ENCODE measurements at regions of chr10 and their contacts with region 1.

Region 1: DNA sequence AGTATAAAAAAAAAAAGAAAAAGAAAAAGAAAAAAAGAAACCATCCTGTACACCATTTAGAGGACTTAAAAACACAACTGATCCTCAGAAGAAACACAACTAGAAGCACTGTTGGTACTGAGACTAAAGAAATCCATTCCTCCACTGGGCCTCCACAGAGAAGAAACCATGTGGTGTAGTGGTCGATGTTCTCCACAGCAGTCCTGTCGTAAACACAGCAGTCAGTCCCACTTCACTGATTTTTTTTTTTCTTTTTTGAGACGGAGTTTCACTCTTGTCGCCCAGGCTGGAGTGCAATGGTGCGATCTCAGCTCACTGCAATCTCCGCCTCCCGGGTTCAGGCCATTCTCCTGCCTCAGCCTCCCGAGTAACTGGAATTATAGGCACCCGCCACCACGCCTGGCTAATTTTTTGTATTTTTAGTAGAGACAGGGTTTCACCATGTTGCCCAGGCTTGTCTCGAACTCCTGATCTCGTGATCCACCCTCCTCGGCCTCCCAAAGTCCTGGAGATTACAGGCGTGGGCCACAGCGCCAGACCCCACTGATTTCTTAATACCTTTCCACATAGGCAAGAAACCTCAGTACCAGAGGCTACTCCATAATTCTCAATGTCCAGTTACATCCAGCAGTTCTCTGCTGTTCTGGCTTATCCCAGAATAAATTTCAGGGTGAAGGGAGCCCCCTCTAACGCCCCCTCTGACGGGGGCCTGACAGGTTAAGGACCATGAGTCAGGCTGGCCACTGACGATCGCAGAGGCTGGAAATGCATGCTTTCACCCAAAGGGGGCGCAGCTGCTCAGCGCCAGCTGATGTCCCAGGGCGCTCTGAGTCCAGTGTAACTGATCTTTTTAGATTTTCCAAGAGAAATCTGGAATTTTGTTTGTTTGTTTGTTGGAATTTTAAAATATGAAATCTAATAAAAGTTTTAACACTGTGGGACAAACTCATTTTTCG is 24.8 kb upstream of the FFAR4 start:
- DNase-seq: peak; percentile 15
- ATAC-seq: no peak
- H3K4me3 Mint-ChIP-seq: no peak overlapping the region
- H3K27ac Mint-ChIP-seq: no peak overlapping the region
- H3K4me1 Mint-ChIP-seq: no peaks in the 10 kb centered on the region
- H3K27me3 Mint-ChIP-seq: peaks cover 4% of the 10 kb centered on the region
- CTCF ChIP-seq: peak; percentile 75

Region 2: GRCh38 chr10:93560541-93560940 is 18.9 kb after region 1 on chr10:
- CTCF ChIA-PET with region 1: no interaction called
- POLR2A ChIA-PET with region 1: no interaction called
- intact Hi-C with region 1: no loop called
- DNase-seq: no peak
- ATAC-seq: no peak
- H3K4me3 Mint-ChIP-seq: no peak overlapping the region
- H3K27ac Mint-ChIP-seq: no peak overlapping the region
- H3K4me1 Mint-ChIP-seq: no peaks in the 10 kb centered on the region
- H3K27me3 Mint-ChIP-seq: peaks cover 4% of the 10 kb centered on the region
- CTCF ChIP-seq: no peak

Region 3: GRCh38 chr10:93816123-93816747 is 274.6 kb after region 1 on chr10:
- CTCF ChIA-PET with region 1: interaction called, 3 read pairs
- POLR2A ChIA-PET with region 1: no interaction called
- intact Hi-C with region 1: loop called (anchors 10 kb)
- DNase-seq: peak; percentile 50
- ATAC-seq: peak; percentile 65
- H3K4me3 Mint-ChIP-seq: no peak overlapping the region
- H3K27ac Mint-ChIP-seq: no peak overlapping the region
- H3K4me1 Mint-ChIP-seq: no peaks in the 10 kb centered on the region
- H3K27me3 Mint-ChIP-seq: peaks cover 44% of the 10 kb centered on the region
- CTCF ChIP-seq: peak; percentile 66

Region 4: DNA sequence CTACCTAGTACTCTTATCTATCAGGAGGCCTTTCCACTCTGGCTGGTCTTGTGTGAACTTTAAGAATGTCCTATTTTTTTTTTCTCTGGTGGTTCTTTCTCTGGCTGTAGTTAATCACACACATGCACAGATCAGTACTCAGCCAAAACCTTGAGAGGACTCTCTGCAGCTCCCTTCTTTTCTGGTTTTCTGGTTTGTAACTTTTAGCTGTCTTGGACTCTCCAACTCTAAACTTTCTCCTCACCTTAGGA is 949.0 kb after region 1 on chr10:
- CTCF ChIA-PET with region 1: no interaction called
- POLR2A ChIA-PET with region 1: no interaction called
- intact Hi-C with region 1: no loop called
- DNase-seq: no peak
- ATAC-seq: no peak
- H3K4me3 Mint-ChIP-seq: no peak overlapping the region
- H3K27ac Mint-ChIP-seq: no peak overlapping the region
- H3K4me1 Mint-ChIP-seq: no peaks in the 10 kb centered on the region
- H3K27me3 Mint-ChIP-seq: peaks cover 6% of the 10 kb centered on the region
- CTCF ChIP-seq: no peak